ENCODE measurements at regions of chr12 and their contacts with region 1.

Region 1: DNA sequence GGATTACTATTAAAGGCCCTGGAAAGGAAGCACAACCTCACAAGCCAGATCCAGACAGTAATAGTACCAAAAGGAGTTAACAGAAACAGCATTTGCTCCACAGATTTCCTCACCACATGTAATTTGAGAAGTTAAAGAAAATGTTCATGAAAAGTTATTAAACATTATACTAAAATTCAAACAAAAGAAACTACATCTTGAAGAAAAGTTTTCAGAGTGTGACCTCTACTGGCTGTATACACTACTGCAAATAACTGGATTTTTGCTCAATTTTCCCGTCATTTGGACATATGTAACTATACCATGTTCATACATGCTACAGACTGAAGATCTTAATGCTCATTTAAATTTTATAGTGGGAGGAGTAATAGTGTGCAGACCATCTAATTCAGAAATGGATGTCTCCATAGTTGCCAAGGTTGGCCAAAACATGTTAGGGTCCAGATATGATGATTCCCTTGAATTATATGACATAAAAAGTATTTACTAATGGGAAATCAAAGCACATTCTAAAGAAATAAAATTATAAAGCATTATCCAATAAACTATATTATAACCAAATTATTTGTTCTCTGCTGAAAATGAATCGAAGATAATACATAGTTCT is 5.6 kb downstream of the KRR1 start:
- DNase-seq: peak; percentile 67
- ATAC-seq: peak; percentile 59
- H3K4me3 ChIP-seq: no peak overlapping the region
- H3K27ac ChIP-seq: no peak overlapping the region
- H3K4me1 ChIP-seq: peaks cover 1% of the 10 kb centered on the region; the same call in 1 of the 2 replicates
- H3K27me3 ChIP-seq: no peaks in the 10 kb centered on the region
- CTCF ChIP-seq: peak; percentile 75
- POLR2A ChIP-seq: no peak
- RAD21 ChIP-seq: peak; percentile 66

Region 2: GRCh38 chr12:75390899-75391538 is 114.8 kb before region 1 on chr12 and contains the start of gene GLIPR1L2:
- CTCF ChIA-PET with region 1: no interaction called
- POLR2A ChIA-PET with region 1: no interaction called
- dilution Hi-C with region 1: no loop called
- in situ Hi-C with region 1: no loop called
- intact Hi-C with region 1: loop called (anchors 1 kb)
- DNase-seq: peak; percentile 97
- ATAC-seq: peak; percentile 99
- H3K4me3 ChIP-seq: peak within 1 kb of the TSS; percentile 51
- H3K27ac ChIP-seq: peak within 1 kb of the TSS; percentile 81
- H3K4me1 ChIP-seq: 0 out of 2 replicates have a peak, but pooled peaks cover 2% of the 10 kb centered on the region
- H3K27me3 ChIP-seq: no peaks in the 10 kb centered on the region
- CTCF ChIP-seq: peak; percentile 91
- POLR2A ChIP-seq: no peak
- RAD21 ChIP-seq: peak; percentile 66
- total RNA-seq, gene GLIPR1L2: not detected in 2 replicates

Region 3: DNA sequence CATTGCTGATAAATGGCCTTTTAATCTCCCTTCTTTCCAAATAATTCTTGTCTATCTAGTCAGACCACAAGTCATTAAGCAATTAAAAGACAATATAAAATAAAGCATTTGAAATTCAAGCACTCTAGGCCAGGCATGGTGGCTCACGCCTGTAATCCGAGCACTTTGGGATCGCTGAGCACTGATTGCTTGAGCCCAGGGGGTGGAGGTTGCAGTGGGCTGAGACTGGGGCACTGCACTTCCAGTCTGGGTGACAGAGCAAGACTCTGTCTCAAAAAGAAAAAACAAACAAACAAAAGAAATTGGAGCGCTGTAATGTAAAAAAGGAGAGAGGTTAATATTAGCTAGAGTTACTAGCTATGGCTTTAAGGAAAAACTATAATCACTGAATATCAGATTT is 1403.5 kb after region 1 on chr12:
- CTCF ChIA-PET with region 1: no interaction called
- POLR2A ChIA-PET with region 1: interaction called, 14 read pairs
- dilution Hi-C with region 1: no loop called
- in situ Hi-C with region 1: no loop called
- intact Hi-C with region 1: no loop called
- DNase-seq: no peak
- ATAC-seq: peak; percentile 77
- H3K4me3 ChIP-seq: no peak overlapping the region
- H3K27ac ChIP-seq: no peak overlapping the region
- H3K4me1 ChIP-seq: no peaks in the 10 kb centered on the region
- H3K27me3 ChIP-seq: no peaks in the 10 kb centered on the region
- CTCF ChIP-seq: no peak
- POLR2A ChIP-seq: no peak
- RAD21 ChIP-seq: no peak

Measured in IMR-90 (cell line).